Activated CD4-positive, alpha-beta T cell treated with anti-CD3 and anti-CD28 coated beads, Interleukin-2, amount 10 ng/mL, durations not matched to agents 24 days and 14 days (primary cell): ENCODE measurements at regions of chr5 and their contacts with region 1.

Region 1: DNA sequence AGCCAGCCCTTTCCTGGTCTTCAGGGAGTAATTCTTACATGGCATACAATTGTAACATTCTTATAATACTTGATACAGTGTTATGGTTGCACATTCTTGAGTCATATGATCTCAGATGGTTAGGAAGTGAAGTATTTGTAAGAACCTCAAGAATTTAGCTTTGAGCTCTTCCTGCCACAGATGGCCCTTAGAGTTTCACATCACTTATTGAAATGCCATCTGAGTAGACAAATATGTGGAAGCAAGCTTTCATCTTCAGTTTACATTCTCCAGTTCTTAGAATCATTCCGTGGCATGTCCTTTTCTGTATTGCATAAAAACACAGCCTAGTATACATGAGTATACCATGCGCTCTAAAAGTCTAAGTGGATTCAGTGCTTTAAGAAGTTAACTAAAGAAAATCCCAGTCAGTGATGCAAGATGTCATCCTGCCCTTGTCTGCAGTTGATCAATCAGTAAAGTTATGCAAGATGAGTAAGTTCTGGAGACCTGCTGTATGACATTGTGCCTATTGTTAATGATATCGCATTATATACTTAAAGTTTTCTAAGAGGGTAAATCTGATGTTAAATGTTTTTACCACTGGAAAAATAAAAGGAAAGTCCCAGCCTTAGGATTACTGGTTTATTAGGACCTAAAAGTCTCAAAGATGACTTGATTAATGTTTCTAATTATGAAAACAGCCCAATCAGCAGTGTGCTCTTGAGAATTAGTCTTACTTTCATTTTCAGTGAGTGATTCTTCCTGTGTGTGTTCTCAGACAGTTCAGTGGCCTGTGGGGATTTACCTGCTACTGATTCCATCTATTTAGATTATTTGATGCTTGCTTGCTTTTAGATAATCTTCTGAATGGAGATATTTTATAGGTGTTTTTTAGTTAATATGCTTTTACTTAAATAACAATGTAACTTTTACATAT is 29.4 kb downstream of the RHOBTB3 start:
- DNase-seq: no peak
- H3K4me3 Mint-ChIP-seq: peak overlapping the region; percentile 68
- H3K27ac Mint-ChIP-seq: peak overlapping the region; percentile 77
- H3K4me1 Mint-ChIP-seq: peaks cover 23% of the 10 kb centered on the region
- H3K27me3 Mint-ChIP-seq: peaks cover 42% of the 10 kb centered on the region

Region 2: GRCh38 chr5:95746722-95747679 is 13.5 kb before region 1 on chr5:
- intact Hi-C with region 1: loop called (anchors 1 kb)
- DNase-seq: no peak
- H3K4me3 Mint-ChIP-seq: no peak overlapping the region
- H3K27ac Mint-ChIP-seq: no peak overlapping the region
- H3K4me1 Mint-ChIP-seq: peaks cover 9% of the 10 kb centered on the region
- H3K27me3 Mint-ChIP-seq: peaks cover 27% of the 10 kb centered on the region

Region 3: DNA sequence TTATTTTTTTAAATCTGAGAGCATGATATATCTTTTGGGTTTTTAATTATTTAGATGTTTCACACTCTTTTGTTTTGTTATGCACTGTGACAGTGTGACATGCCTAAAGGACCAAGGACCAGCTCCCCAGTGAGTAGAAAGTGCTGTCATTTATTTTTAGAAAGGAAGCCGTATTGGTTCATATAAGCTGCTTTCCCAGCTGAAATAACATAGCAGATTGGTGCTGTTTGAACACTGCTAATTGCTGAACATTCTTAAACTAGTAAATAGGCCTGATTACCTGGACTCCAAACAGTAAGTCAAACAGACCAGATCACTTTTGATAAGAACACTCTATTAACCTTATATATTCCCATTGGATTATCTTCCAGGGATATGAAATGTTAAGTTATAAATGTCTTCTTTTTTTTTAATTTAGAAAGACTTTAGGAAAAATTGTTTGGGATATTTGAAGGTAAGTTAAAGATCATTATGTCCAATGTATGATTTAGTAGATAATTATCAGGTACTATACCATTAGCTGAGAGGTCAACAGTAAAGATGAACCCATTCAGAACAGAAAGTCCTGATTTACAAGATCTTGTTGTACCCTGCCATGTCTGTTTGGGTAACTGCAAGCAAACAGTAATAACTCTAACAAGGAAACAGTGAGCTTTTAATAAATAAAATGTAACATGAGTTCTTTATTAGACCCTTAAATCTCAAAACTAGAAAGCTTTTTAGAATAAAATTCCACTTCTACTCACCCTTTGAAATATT is 228.9 kb after region 1 on chr5:
- intact Hi-C with region 1: no loop called
- DNase-seq: no peak
- H3K4me3 Mint-ChIP-seq: no peak overlapping the region
- H3K27ac Mint-ChIP-seq: no peak overlapping the region
- H3K4me1 Mint-ChIP-seq: no peaks in the 10 kb centered on the region
- H3K27me3 Mint-ChIP-seq: peaks cover 4% of the 10 kb centered on the region